Endothelial cell of umbilical vein (primary cell): ENCODE measurements at regions of chr17 and their contacts with region 1.

Region 1: DNA sequence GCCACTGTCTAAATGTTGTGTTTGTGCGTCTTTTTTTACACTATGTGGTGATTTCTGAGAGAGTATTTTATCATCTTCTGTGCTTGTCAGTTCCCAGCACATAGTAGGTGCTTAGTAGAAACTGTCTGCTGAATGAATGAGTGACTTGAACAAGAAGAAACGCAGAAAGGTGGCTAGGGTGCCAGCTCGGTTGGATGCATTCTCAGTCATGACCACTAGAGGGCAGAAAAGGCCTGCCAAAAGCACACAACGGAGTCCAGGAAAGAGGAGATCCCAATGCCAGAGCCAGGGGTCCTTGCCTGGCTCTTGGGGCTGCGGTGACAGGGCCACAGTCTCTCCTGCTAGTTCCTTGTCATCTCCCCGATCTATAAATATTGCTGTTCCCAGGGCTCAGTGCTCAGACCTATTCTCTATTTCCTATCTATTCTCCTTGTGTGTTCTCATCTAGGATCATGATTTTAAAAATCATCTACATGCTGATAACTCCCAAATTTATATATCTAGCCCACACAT is 57.3 kb upstream of the CCL1 start:
- DNase-seq: peak; percentile 78
- H3K4me3 ChIP-seq: no peak overlapping the region
- H3K27ac ChIP-seq: no peak overlapping the region
- H3K4me1 ChIP-seq: no peaks in the 10 kb centered on the region
- H3K27me3 ChIP-seq: peaks cover 25 to 26% of the 10 kb centered on the region in 2 experiments
- CTCF ChIP-seq: peak; percentile 88 to 93
- POLR2A ChIP-seq: no peak

Region 2: DNA sequence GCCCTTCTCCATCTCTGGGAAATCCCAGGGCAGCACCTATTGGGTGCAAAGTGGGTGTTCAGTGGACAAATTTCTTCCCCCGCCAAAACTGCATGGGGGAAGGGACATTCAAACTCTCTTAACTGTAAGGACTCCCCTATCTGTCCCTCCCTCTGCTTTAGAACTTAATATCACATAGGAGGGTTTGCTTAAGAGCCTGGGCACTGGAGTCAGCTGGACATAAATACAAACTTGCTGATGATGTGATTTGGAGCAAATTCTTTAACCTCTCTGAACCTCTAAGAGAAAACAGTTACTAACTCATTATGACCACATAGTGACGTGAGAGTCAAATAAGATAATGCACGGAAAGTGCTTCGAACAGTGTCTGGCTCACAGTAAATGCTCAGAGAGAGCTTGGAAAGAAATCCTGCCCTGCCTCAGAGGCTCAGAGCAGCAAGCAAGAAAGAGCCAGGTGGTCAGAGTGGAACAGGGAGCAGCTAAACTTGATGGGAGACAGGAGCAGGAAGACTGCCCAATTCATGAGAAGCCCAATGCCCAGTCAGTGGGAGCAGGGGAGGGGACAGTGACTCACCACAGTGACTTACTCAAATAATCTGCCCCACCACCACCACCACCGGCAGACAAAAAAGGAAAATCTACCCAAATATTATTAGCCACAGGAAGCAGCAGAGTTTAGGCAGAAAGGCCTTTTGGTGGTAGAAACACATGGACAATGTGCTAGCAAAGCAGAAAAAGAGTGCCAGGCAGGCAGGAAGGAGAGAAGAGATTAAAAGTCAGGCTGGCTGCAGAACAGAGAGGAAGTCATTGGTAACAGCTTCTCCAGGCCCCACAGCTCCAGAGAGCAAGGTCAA is 33.4 kb before region 1 on chr17:
- CTCF ChIA-PET with region 1: interaction called, 28 read pairs
- POLR2A ChIA-PET with region 1: no interaction called
- dilution Hi-C with region 1: no loop called
- intact Hi-C with region 1: no loop called
- DNase-seq: peak; percentile 53
- H3K4me3 ChIP-seq: no peak overlapping the region
- H3K27ac ChIP-seq: peak overlapping the region; percentile 72
- H3K4me1 ChIP-seq: peaks cover 46% of the 10 kb centered on the region
- H3K27me3 ChIP-seq: peaks cover 0 to 4% of the 10 kb centered on the region in 2 experiments
- CTCF ChIP-seq: no peak
- POLR2A ChIP-seq: no peak

Region 3: DNA sequence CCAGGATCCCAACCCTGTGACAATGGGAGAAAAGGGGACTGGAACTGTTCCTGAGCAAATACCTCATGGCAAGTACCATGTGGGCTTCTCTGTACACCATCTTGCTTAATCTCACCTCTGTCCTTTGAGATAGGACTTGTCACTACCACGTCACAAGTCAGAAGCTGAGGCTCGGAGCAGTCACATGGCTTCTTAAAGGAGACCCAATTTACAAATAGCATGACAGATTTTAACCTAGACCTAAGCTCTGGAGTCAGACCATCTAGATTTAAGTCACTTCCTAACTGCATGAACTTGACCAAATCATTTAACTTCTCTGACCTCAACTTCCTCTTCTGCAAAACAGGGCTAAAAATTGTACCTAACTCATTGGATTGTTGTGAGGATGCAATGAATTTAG is 21.3 kb before region 1 on chr17:
- CTCF ChIA-PET with region 1: interaction called, 12 read pairs
- POLR2A ChIA-PET with region 1: no interaction called
- dilution Hi-C with region 1: no loop called
- intact Hi-C with region 1: no loop called
- DNase-seq: no peak
- H3K4me3 ChIP-seq: no peak overlapping the region
- H3K27ac ChIP-seq: no peak overlapping the region
- H3K4me1 ChIP-seq: no peaks in the 10 kb centered on the region
- H3K27me3 ChIP-seq: peaks cover 5 to 13% of the 10 kb centered on the region in 2 experiments
- CTCF ChIP-seq: no peak
- POLR2A ChIP-seq: no peak

Region 4: DNA sequence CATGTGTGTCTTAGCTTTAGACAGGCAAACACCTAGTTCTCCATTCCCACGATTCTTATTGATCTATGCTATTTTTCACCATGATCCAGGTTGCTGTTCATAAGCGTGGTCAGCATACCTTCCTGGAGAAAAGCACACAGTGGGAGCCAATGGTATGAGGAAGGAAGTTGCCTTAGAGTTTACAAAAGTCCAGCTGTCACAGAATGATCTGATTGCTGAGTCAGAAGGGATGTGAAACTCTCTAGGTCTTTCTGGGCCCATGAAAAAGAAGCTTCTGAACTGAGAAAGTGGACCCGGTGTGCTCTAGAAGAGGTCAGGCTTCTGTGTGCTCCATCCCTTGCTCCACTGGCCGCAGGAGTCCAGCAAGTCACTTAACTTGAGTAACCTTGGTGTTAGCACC is 13.7 kb after region 1 on chr17:
- CTCF ChIA-PET with region 1: interaction called, 12 read pairs
- POLR2A ChIA-PET with region 1: no interaction called
- dilution Hi-C with region 1: no loop called
- intact Hi-C with region 1: no loop called
- DNase-seq: no peak
- H3K4me3 ChIP-seq: no peak overlapping the region
- H3K27ac ChIP-seq: no peak overlapping the region
- H3K4me1 ChIP-seq: no peaks in the 10 kb centered on the region
- H3K27me3 ChIP-seq: peaks cover 0 to 6% of the 10 kb centered on the region in 2 experiments
- CTCF ChIP-seq: no peak
- POLR2A ChIP-seq: no peak

Region 5: GRCh38 chr17:34519282-34519681 is 99.0 kb after region 1 on chr17:
- CTCF ChIA-PET with region 1: interaction called, 14 read pairs
- POLR2A ChIA-PET with region 1: no interaction called
- dilution Hi-C with region 1: no loop called
- intact Hi-C with region 1: loop called (anchors 1 kb)
- DNase-seq: peak; percentile 2
- H3K4me3 ChIP-seq: no peak overlapping the region
- H3K27ac ChIP-seq: no peak overlapping the region
- H3K4me1 ChIP-seq: no peaks in the 10 kb centered on the region
- H3K27me3 ChIP-seq: no peaks in the 10 kb centered on the region
- CTCF ChIP-seq: peak; percentile 43 to 59
- POLR2A ChIP-seq: no peak

Region 6: DNA sequence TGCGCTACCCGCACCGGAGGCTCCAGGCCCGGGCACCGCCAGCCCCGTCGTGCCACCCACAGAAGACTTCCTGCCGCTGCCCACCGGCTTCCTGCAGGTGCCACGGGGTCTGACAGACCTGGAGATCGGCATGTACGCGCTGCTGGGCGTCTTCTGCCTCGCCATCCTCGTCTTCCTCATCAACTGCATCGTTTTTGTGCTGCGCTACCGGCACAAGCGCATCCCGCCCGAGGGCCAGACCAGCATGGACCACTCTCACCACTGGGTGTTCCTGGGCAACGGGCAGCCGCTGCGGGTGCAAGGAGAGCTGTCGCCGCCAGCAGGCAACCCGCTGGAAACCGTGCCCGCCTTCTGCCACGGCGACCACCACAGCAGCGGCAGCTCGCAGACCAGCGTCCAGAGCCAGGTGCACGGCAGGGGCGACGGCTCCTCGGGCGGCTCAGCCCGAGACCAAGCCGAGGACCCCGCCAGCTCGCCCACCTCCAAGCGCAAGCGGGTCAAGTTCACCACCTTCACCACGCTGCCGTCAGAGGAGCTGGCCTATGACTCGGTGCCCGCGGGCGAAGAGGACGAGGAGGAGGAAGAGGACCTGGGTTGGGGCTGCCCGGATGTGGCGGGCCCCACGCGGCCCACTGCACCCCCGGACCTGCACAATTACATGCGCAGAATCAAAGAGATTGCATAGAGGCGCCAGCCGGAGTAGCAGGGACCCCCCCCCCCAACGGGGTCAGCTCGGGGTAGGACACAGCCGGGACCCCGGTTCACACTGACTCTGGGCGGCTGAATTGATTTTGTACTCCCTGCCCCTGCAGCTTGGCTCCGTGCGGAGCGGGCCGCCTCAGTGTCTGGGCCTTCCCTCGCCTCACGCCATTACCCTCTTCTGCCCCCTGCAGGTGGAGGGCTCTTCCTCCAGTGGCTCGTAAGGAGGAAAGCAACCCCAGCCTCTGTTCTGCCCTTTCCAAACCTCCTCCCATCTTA is 217.5 kb after region 1 on chr17:
- CTCF ChIA-PET with region 1: interaction called, 38 read pairs
- POLR2A ChIA-PET with region 1: no interaction called
- dilution Hi-C with region 1: no loop called
- intact Hi-C with region 1: loop called (anchors 1 kb)
- DNase-seq: peak; percentile 68
- H3K4me3 ChIP-seq: no peak overlapping the region
- H3K27ac ChIP-seq: no peak overlapping the region
- H3K4me1 ChIP-seq: peaks cover 3% of the 10 kb centered on the region
- H3K27me3 ChIP-seq: peaks cover 2 to 9% of the 10 kb centered on the region in 2 experiments
- CTCF ChIP-seq: peak; percentile 72 to 97
- POLR2A ChIP-seq: no peak

Region 7: GRCh38 chr17:34980681-34981537 is 560.6 kb after region 1 on chr17:
- CTCF ChIA-PET with region 1: no interaction called
- POLR2A ChIA-PET with region 1: no interaction called
- dilution Hi-C with region 1: no loop called
- intact Hi-C with region 1: loop called (anchors 1 kb)
- DNase-seq: peak; percentile 80
- H3K4me3 ChIP-seq: peak overlapping the region; percentile 65 to 92 (median 89)
- H3K27ac ChIP-seq: peak overlapping the region; percentile 96
- H3K4me1 ChIP-seq: peaks cover 19% of the 10 kb centered on the region
- H3K27me3 ChIP-seq: no peaks in the 10 kb centered on the region
- CTCF ChIP-seq: peak in 1 of 2 donors; percentile 51
- POLR2A ChIP-seq: peak; percentile 80